Vagina (tissue), 2 donors: ENCODE measurements at regions of chrX and their contacts with region 1.

Region 1: GRCh38 chrX:49191033-49191871 is 5.1 kb upstream of the PRICKLE3 start:
- DNase-seq: peak in 1 of 2 donors; percentile 99
- H3K4me3 ChIP-seq: peak overlapping the region; percentile 58 to 67
- H3K27ac ChIP-seq: peak overlapping the region; percentile 90
- H3K4me1 ChIP-seq: peaks cover 5% of the 10 kb centered on the region
- H3K27me3 ChIP-seq: no peaks in the 10 kb centered on the region
- CTCF ChIP-seq: no peak
- POLR2A ChIP-seq: peak in 1 of 2 donors; percentile 65

Region 2: GRCh38 chrX:49254639-49255038 is 63.4 kb after region 1 on chrX:
- intact Hi-C with region 1: no loop called
- DNase-seq: no peak
- H3K4me3 ChIP-seq: no peak overlapping the region
- H3K27ac ChIP-seq: no peak overlapping the region
- H3K4me1 ChIP-seq: no peaks in the 10 kb centered on the region
- H3K27me3 ChIP-seq: no peaks in the 10 kb centered on the region
- CTCF ChIP-seq: no peak
- POLR2A ChIP-seq: no peak

Region 3: DNA sequence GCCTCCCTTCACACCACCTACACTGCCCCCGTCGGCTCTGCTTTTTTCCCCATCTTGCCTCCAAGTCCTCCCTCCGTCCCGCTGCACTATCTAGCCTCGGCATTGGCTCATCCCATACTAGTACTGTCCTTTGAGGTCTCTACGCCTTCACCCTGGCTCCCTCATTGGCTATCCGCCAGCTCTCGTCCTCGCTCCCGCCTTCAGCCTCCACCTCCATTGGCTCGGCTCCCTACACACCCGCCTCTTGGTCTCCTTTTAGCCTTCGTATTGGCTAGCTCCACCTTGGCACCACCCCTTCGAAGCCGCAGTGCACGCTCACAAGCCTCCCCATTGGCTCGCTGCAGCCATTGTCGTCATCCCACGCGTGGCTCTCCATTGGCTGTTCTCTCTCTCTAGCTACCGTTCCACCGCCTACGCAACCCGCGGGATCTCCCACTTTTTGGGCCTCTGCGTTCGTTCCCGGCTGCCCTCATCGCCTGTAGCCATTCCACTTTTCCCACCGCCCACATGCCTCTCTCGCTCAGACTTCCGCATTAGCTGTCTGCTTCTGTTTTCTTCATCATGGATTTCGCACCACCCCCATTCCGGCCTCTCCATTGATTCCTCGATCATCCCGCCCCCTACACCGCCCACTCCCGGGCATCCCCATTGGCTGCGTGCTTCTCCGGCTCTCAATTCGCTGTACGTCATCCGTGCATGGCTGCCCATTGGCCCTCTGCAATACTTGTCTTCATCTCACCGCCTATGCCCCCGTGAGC is 77.9 kb after region 1 on chrX:
- intact Hi-C with region 1: loop called (anchors 10 kb)
- DNase-seq: peak in 1 of 2 donors; percentile 98
- H3K4me3 ChIP-seq: peak overlapping the region; percentile 62 to 73
- H3K27ac ChIP-seq: peak overlapping the region; percentile 85
- H3K4me1 ChIP-seq: peaks cover 23% of the 10 kb centered on the region
- H3K27me3 ChIP-seq: no peaks in the 10 kb centered on the region
- CTCF ChIP-seq: no peak
- POLR2A ChIP-seq: peak in 1 of 2 donors; percentile 20